GM13977 (cell line): ENCODE measurements at regions of chr11 and their contacts with region 1.

Region 1: GRCh38 chr11:77191823-77192495 is 63.9 kb downstream of the MYO7A start:
- DNase-seq: peak; percentile 75
- CTCF ChIP-seq: peak; percentile 44

Region 2: DNA sequence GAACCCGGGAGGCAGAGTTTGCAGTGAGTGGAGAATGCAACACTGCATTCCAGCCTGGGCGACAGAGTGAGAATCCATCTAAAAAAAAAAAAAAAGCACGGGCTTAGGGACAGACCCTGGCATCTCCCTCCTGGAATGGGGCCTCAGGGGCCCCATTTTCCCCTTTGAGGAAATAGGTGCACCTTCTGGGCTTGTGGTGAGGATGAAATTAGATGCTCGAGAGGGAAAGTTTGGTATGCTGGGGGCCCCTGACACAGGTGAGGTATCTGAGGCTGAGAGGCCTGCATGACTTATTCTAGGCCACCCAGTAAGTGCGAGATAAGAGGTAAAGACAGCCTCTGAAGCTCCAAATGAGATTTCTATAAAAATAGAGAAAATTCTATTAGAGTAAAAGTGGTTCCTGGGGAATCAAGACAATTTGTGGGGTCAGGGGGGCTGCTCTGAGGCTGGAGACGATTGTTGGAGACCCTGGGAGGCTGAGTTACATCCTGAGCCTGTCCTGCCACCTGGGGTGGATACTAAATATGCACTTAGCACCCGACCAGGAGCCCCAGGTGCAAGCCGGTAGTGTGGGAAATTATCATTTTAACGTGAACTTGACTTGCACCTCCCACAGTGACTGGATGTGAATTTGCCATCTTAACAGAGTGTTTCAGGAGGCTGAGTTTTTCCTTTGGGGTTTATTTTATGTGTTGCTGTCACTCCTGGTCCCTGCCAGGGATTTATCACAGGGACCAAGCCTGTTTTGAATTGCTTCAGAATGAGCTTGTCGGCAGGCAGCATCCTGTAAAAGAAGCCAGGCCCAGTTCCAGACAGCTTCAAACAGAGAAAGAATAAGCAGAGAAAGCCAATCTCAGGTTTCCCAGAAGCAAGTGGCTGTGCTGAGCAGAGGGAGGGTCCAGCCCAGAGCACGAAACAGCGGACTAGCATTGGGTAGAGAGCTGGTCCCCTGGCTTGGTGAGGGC is 457.2 kb before region 1 on chr11:
- in situ Hi-C with region 1: no loop called
- DNase-seq: no peak
- CTCF ChIP-seq: no peak

Region 3: GRCh38 chr11:77557554-77557953 is 365.6 kb after region 1 on chr11:
- in situ Hi-C with region 1: loop called (anchors 10 kb)
- DNase-seq: no peak
- CTCF ChIP-seq: peak; percentile 36